Sciatic nerve (tissue), 2 donors: ENCODE measurements at regions of chr3 and their contacts with region 1.

Region 1: DNA sequence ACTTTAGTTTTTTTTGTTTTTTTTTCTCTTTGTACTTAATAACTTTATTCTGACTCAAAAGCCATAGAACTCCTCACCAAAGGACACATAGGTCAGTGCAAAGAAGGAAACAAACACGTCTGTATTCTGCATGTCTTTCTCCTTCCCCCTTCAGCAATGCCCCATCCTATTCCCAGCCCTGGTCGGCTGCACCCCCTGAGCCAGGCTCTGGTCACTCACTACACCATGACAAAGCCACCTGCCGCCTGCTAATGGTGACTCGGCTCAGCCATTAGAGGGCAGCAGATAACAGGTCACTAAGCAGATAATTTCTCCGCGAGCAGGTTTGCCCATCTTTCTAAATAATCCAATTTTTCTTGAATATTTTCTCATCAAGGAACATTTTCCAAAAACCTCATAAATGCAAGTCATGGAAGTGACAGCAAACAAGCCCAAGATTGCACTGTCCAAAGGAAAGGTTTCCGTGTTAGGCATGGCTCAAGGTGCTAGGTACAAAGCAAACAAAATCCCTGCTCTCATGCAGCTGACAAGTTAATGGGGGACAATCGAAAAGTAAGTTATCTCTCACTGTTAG is 37.8 kb downstream of the TM4SF4 start:
- DNase-seq: peak; percentile 73
- ATAC-seq: peak; percentile 77

Region 2: DNA sequence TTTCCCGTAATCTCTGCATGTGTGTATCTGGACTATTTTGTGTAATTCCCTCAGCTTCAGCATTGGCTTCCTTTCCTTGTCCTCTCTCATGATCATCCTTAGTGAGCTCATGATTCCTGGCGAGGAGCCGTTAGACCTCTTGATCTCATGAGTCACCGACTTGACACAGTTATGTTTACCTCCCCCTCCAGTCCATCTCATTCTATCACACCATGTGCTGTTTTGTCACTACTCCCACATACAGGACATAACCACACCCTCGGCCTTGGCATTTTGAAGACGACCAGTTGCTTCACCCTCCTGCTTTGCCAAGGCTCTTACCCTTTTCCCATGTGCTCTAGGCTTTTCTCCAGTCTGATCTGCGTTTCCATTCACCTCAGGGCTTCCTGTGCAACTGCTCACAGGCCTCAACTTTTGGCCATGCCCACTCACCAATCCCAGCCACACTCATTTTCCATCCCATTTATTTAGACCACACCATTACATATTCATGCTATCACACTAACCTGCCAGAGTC is 332.2 kb before region 1 on chr3:
- intact Hi-C with region 1: no loop called
- DNase-seq: peak; percentile 90
- ATAC-seq: peak; percentile 99

Region 3: GRCh38 chr3:149454746-149455145 is 57.5 kb before region 1 on chr3:
- intact Hi-C with region 1: no loop called
- DNase-seq: no peak
- ATAC-seq: no peak

Region 4: DNA sequence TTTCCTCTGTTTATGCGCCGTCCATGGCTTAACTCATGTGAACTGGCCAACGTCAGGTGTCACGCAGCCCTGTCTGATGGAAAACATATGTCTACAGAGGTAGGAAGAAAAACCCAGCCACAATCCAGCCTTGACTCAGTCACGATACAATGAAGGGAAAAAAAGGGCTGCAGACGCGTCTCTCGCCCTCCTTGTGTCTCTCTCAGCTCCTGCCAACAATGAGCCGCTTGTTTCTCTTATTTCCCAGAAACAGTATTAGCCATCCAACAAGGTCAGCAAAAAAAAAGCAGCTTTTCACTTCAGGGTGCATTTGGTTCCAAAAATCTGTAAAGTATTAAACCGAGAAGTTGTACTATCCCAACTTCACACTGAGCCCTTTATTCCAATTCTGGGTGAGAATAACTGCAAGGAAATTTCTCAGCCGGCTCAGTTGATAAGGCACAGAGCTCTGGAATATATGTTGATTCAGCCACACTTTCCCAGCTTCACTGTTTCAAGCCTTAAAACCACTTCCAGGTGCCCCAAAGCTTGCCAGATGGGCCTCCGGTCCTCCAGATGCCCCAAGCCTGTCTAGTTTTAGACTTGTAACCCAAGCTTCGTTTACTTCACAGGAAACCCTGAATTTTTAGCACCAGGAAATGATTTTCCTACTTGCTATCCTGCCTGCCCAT is 41.6 kb after region 1 on chr3:
- intact Hi-C with region 1: no loop called
- DNase-seq: peak; percentile 77
- ATAC-seq: peak; percentile 93

Region 5: GRCh38 chr3:149717391-149718056 is 205.2 kb after region 1 on chr3:
- intact Hi-C with region 1: loop called (anchors 5 kb)
- DNase-seq: peak; percentile 72
- ATAC-seq: peak; percentile 82